HEK293 (cell line): ENCODE measurements at regions of chr3 and their contacts with region 1.

Region 1: DNA sequence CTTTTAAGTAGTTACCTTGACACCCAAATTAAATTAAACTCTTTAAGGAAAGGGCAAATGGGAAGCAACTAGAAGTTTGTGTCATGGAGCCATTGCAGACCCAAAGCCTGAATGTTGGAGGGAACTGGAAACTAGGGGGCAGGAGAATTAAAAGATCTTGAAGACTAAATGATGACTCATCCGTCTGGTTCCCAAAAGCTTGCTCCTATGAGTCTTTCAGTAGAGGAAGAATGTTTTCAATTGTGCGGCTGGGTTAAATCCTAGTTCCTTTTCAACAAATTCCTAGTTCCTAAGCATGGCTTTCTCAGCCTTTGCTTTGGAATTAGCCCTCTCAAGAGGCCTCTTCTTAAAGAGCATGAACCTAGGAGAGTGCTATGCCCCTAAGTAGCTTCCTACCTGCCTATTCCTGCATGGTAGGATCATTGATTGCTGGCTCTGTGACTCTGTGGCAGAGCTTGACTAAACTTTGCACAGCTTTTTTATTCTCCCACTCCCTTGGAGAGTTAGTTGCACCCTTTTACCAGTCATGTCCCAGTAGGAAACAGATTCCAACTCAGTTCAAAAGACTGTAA is 17.7 kb downstream of the CLEC3B start:
- H3K4me3 ChIP-seq: no peak overlapping the region
- H3K27ac ChIP-seq: no peak overlapping the region
- H3K4me1 ChIP-seq: no peaks in the 10 kb centered on the region
- CTCF ChIP-seq: no peak

Region 2: DNA sequence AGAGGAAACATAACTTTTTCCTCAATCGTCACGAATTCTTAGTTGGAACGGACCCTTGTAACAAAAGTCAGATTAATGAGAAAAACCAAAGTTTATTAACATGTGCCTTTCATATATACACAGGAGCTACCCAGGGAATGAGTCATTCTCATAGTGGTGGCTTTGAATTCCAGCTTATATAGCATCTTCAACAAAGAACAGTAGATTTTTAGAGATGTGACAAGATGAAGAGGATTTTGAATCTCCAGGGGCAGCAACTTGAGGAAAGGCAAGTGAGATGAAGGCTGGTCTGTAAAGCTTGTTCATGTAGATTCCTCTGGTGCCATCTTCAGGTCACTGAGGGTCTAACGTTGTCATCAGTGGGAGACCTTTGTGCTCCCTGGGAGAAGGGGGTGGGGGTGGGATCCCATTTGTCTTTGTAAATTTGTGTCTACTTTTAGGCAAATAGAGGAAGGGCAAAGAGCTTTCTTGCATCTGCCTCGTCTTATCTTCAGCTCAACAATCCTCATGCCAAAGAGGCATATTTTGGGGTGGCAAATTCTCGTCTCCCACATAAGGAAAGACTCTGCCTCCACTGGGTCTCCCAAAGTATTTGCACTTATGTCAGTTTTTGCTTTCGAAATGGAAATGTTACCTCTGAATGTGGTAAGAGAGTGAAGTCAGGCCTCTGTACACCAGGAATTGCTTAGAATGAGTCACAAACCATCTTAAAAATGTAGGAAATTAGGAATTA is 11.8 kb after region 1 on chr3:
- CTCF ChIA-PET with region 1: interaction called, 26 read pairs
- POLR2A ChIA-PET with region 1: interaction called, 4 read pairs
- H3K4me3 ChIP-seq: no peak overlapping the region
- H3K27ac ChIP-seq: no peak overlapping the region
- H3K4me1 ChIP-seq: no peaks in the 10 kb centered on the region
- CTCF ChIP-seq: no peak

Region 3: DNA sequence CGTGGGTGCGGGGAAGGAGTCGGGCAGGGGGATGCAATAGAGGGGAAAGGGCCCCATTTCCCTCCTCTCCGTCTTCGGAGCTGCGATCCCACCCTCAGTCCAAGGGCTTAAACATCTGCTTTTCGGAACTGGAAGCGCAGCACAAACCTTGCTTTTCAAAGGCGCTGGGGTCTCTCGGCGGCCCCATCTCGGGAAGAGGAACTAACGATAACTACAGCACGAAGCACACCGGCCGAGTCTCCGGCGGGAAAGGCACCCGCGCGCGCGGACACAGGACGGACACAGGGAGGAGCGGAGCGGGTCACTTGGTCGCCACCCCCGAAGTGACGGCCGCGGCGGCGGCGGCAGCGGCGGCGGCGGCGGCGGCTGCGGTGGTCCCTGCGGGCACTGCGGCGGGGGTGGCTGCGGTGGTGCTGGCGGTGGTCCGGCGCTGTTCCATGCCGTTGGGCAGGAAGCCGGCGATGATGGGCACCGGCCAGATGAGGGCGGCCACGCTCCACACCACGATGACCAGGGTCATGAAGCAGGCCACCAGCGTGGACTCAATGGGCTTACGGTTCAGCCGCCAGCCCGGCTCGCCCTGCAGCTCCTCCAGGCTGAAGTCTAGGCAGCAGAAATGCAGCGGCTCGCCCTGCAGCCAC is 181.1 kb after region 1 on chr3:
- CTCF ChIA-PET with region 1: interaction called, 12 read pairs
- POLR2A ChIA-PET with region 1: no interaction called
- H3K4me3 ChIP-seq: peak overlapping the region; percentile 69
- H3K27ac ChIP-seq: no peak overlapping the region
- H3K4me1 ChIP-seq: peaks cover 4% of the 10 kb centered on the region; the same call in 1 of the 2 replicates
- CTCF ChIP-seq: peak; percentile 67

Region 4: DNA sequence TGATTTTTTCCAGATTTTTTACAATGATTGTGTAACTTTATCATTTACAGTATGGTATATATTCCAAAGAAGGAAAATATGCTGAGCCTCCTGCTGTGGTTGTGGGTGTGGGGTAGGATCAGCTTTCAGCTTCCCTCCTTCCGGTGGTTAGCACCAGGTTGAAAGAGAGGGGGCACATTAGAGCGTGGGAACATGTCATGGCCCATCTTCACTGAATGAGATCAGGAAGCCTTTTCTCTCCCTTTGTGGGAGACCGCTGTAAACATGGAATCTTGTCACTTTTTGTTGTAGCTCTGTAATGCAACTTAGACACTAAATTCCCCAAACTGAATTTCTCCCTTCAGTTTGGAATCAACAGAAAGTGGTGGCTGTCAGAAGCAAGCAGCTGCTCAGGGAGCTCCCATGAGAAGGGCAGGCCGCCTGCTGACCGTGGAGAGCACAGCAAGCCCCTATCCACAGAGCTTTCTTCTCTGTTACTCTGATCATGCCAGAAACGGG is 464.1 kb after region 1 on chr3:
- CTCF ChIA-PET with region 1: interaction called, 36 read pairs
- POLR2A ChIA-PET with region 1: no interaction called
- H3K4me3 ChIP-seq: no peak overlapping the region
- H3K27ac ChIP-seq: no peak overlapping the region
- H3K4me1 ChIP-seq: peaks cover 3% of the 10 kb centered on the region; the same call in 1 of the 2 replicates
- CTCF ChIP-seq: peak; percentile 37; the same call in 1 of the 2 replicates